GM12878 (cell line): ENCODE measurements at regions of chr1 and their contacts with region 1.

Region 1: DNA sequence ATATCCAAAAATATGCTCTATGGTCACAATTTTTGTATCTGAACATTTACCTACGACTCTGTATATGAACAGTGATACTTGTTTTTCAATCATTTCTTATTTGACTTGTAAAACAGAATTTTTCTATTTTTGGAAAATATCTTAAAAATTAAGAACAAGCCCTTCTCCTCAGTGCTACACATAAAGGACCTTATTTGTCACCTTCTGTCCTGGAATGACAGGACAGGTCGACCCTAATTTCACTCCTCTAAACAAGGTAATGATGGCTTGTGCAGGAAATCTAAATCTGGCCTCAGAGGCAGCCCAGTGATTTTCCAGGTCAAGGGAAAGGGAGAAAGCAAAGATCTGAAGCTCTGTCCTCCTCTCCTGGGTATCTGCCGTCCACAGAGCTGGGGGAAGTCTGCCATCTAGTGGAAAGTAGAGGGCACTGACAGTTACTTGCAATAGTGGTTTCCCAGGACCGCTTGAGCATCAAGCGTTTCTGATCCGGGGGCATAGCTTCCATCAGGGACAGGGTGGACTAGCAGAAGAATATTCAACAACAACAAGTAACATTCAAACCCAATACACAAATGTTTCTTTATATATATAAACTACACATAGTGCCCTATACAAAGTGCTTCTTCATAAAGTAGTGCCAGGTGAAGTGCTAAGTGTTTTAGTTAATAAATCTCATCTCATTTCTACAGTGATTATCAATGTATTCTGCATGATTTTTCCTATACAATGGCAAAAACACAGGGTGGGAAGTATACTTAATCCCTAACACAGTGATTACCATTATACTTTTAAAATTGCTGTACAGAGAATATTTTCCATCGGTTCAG is 74.6 kb downstream of the SLC25A24 start:
- DNase-seq: peak; percentile 26
- ATAC-seq: peak; percentile 98
- H3K4me3 ChIP-seq: no peak overlapping the region
- H3K27ac ChIP-seq: no peak overlapping the region
- H3K4me1 ChIP-seq: no peaks in the 10 kb centered on the region
- H3K27me3 ChIP-seq: peaks cover 0 to 3% of the 10 kb centered on the region in 2 experiments; a peak in 2 of 4 replicates
- CTCF ChIP-seq: peak; percentile 84 to 90 (median 85)
- EP300 ChIP-seq: no peak
- POLR2A ChIP-seq: no peak
- RAD21 ChIP-seq: peak; percentile 100

Region 2: GRCh38 chr1:107277022-107277421 is 848.5 kb before region 1 on chr1:
- CTCF ChIA-PET with region 1: no interaction called
- POLR2A ChIA-PET with region 1: no interaction called
- RAD21 ChIA-PET with region 1: no interaction called
- SMC1A ChIA-PET with region 1: no interaction called
- in situ Hi-C with region 1: no loop called
- intact Hi-C with region 1: loop called (anchors 10 kb)
- DNase-seq: no peak
- ATAC-seq: peak; percentile 75
- H3K4me3 ChIP-seq: no peak overlapping the region
- H3K27ac ChIP-seq: no peak overlapping the region
- H3K4me1 ChIP-seq: no peaks in the 10 kb centered on the region
- H3K27me3 ChIP-seq: no peaks in the 10 kb centered on the region
- CTCF ChIP-seq: peak; percentile 44 to 51 (median 46); a peak in 5 of 6 replicates
- EP300 ChIP-seq: no peak
- POLR2A ChIP-seq: no peak
- RAD21 ChIP-seq: peak; percentile 53

Region 3: GRCh38 chr1:107788206-107789202 is 337.0 kb before region 1 on chr1:
- CTCF ChIA-PET with region 1: interaction called, 568 read pairs
- POLR2A ChIA-PET with region 1: interaction called, 3 read pairs
- RAD21 ChIA-PET with region 1: interaction called, 425 read pairs
- SMC1A ChIA-PET with region 1: interaction called, 461 read pairs
- in situ Hi-C with region 1: loop called (anchors 5 kb)
- intact Hi-C with region 1: loop called (anchors 1 kb)
- DNase-seq: no peak
- ATAC-seq: no peak
- H3K4me3 ChIP-seq: no peak overlapping the region
- H3K27ac ChIP-seq: no peak overlapping the region
- H3K4me1 ChIP-seq: peaks cover 10% of the 10 kb centered on the region; the same call in 1 of the 2 replicates
- H3K27me3 ChIP-seq: no peaks in the 10 kb centered on the region
- CTCF ChIP-seq: no peak
- EP300 ChIP-seq: no peak
- POLR2A ChIP-seq: no peak
- RAD21 ChIP-seq: no peak

Region 4: GRCh38 chr1:107897438-107898345 is 227.8 kb before region 1 on chr1:
- CTCF ChIA-PET with region 1: interaction called, 10 read pairs
- POLR2A ChIA-PET with region 1: no interaction called
- RAD21 ChIA-PET with region 1: interaction called, 8 read pairs
- SMC1A ChIA-PET with region 1: interaction called, 9 read pairs
- in situ Hi-C with region 1: no loop called
- intact Hi-C with region 1: no loop called
- DNase-seq: no peak
- ATAC-seq: peak; percentile 76
- H3K4me3 ChIP-seq: no peak overlapping the region
- H3K27ac ChIP-seq: no peak overlapping the region
- H3K4me1 ChIP-seq: peaks cover 14% of the 10 kb centered on the region
- H3K27me3 ChIP-seq: no peaks in the 10 kb centered on the region
- CTCF ChIP-seq: no peak; a peak in 1 of 6 replicates
- EP300 ChIP-seq: no peak
- POLR2A ChIP-seq: no peak
- RAD21 ChIP-seq: no peak

Region 5: DNA sequence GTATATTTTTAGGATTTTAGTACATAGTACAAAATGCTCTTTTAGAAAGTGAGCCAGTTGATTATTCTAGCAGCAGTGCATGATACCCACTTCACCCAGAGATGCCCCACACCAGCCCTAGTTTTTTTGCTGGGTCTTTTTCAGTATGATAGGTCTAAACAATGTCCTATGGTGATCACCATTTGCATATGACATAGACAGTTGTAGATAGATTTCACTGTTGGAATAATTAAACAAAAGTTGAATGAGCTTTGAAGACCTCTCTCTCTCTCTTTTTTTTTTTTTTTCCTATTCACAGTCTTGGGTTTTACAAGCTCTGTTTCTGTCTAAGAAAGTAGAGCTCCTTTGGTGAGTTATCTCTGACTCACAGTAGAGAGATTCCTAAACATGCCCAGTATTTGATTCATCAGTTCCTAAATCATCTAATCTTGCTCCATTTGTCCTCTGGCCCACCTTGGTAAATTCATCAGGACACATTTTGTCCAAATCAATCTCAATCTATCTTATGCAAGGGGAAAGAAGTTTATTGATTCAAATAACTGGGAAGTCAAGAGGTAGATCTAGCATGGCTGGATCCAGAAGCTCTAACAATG is 115.8 kb before region 1 on chr1:
- CTCF ChIA-PET with region 1: no interaction called
- POLR2A ChIA-PET with region 1: interaction called, 3 read pairs
- RAD21 ChIA-PET with region 1: no interaction called
- SMC1A ChIA-PET with region 1: interaction called, 5 read pairs
- in situ Hi-C with region 1: no loop called
- intact Hi-C with region 1: loop called (anchors 5 kb)
- DNase-seq: no peak
- ATAC-seq: no peak
- H3K4me3 ChIP-seq: no peak overlapping the region
- H3K27ac ChIP-seq: no peak overlapping the region
- H3K4me1 ChIP-seq: peaks cover 11% of the 10 kb centered on the region
- H3K27me3 ChIP-seq: no peaks in the 10 kb centered on the region
- CTCF ChIP-seq: no peak
- EP300 ChIP-seq: no peak
- POLR2A ChIP-seq: no peak
- RAD21 ChIP-seq: no peak